ENCODE measurements at regions of chr13 and their contacts with region 1.

Region 1: DNA sequence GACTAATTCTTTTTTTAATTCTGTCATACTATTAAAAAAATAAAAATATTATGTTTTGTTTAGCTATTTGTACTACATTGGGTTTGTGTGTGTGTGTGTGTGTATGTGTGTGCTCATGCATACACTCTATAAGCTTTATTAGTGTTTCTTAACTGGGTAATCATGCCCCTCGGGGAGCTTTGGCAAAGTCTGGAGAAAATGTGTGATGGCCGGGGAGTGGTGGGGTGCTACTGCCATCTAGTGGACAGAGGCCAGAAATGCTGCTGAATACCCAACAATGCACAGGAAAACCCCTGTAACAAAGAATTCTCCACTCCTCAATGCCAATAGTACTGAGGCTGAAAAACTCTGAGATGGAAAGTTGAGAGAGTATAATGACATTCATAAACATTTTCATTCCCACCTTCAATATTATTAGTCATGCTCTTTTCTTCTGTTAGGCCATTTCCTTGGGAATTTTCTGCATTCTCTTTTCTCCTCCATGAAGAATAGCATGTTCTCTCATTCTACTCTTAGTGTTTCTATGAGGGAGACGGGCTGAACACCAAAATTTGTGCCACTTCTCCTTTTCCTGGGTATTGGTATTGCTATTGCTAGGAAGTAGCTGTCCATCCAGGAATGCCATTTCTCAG is 157.3 kb downstream of the DNAJC3 start:
- DNase-seq: peak; percentile 88
- H3K4me3 Mint-ChIP-seq: no peak overlapping the region
- H3K27ac Mint-ChIP-seq: no peak overlapping the region
- H3K4me1 Mint-ChIP-seq: no peaks in the 10 kb centered on the region
- H3K27me3 Mint-ChIP-seq: peaks cover 13% of the 10 kb centered on the region

Region 2: GRCh38 chr13:95480131-95480545 is 354.1 kb before region 1 on chr13:
- intact Hi-C with region 1: no loop called
- DNase-seq: peak; percentile 58
- H3K4me3 Mint-ChIP-seq: peak overlapping the region; percentile 29
- H3K27ac Mint-ChIP-seq: peak overlapping the region; percentile 58
- H3K4me1 Mint-ChIP-seq: peaks cover 13% of the 10 kb centered on the region
- H3K27me3 Mint-ChIP-seq: peaks cover 7% of the 10 kb centered on the region

Region 3: DNA sequence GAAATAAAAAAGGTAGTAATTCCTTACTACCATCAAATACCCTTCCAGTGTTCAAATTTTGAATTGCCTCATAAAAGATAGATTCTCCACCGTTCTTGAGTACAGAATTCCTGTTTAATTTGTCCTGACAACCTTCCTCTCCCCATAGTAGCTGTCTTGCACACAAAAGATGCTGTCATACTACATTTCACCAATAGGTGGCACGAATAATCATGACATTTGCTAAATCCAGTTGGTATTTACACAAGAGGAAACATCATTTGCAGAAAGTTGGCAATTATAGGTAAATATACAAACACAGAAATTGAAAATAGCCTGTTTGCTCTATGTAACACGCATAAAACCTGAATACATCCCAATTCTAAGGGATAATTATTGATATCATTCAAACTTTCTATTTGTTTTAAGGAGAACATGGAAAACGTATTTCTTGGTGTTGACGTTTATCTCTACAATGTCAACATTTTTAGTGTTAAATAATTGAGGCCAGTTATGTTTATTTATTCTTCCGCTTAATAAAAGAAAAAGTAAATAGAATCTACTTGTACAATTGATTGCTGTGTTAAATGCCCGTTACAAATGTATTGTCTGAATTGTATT is 340.1 kb before region 1 on chr13:
- intact Hi-C with region 1: loop called (anchors 1 kb)
- DNase-seq: peak; percentile 67
- H3K4me3 Mint-ChIP-seq: no peak overlapping the region
- H3K27ac Mint-ChIP-seq: no peak overlapping the region
- H3K4me1 Mint-ChIP-seq: peaks cover 2% of the 10 kb centered on the region
- H3K27me3 Mint-ChIP-seq: peaks cover 4% of the 10 kb centered on the region

Region 4: GRCh38 chr13:95536632-95537241 is 297.5 kb before region 1 on chr13:
- intact Hi-C with region 1: loop called (anchors 1 kb)
- DNase-seq: no peak
- H3K4me3 Mint-ChIP-seq: no peak overlapping the region
- H3K27ac Mint-ChIP-seq: no peak overlapping the region
- H3K4me1 Mint-ChIP-seq: peaks cover 7% of the 10 kb centered on the region
- H3K27me3 Mint-ChIP-seq: peaks cover 23% of the 10 kb centered on the region

Region 5: DNA sequence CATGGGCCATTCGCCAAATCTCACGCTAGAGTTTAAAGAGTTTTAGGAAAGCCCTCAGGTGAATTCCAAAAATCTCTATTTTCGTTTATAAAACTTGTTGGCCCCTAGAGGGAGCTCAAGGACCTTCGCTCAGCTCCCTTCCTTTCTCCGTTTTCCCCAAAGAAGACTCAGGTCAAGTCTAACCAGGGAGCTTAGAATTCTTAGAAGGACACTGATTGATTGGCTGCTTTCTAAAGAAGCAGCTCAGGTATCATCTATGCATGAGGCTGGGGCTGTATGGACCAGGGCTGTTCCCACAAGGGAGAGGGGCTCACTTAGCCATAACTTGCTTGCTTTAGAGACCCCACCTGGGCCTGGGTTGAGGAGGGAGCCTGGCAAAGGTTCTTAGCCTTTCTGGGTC is 210.2 kb before region 1 on chr13:
- intact Hi-C with region 1: loop called (anchors 1 kb)
- DNase-seq: peak; percentile 74
- H3K4me3 Mint-ChIP-seq: no peak overlapping the region
- H3K27ac Mint-ChIP-seq: no peak overlapping the region
- H3K4me1 Mint-ChIP-seq: no peaks in the 10 kb centered on the region
- H3K27me3 Mint-ChIP-seq: peaks cover 33% of the 10 kb centered on the region

Region 6: GRCh38 chr13:95660981-95661581 is 173.2 kb before region 1 on chr13:
- intact Hi-C with region 1: no loop called
- DNase-seq: peak; percentile 72
- H3K4me3 Mint-ChIP-seq: no peak overlapping the region
- H3K27ac Mint-ChIP-seq: no peak overlapping the region
- H3K4me1 Mint-ChIP-seq: no peaks in the 10 kb centered on the region
- H3K27me3 Mint-ChIP-seq: peaks cover 27% of the 10 kb centered on the region

Region 7: GRCh38 chr13:95784161-95784899 is 49.9 kb before region 1 on chr13:
- intact Hi-C with region 1: no loop called
- DNase-seq: no peak
- H3K4me3 Mint-ChIP-seq: no peak overlapping the region
- H3K27ac Mint-ChIP-seq: no peak overlapping the region
- H3K4me1 Mint-ChIP-seq: no peaks in the 10 kb centered on the region
- H3K27me3 Mint-ChIP-seq: no peaks in the 10 kb centered on the region

Measured in activated CD4-positive, alpha-beta T cell treated with anti-CD3 and anti-CD28 coated beads, Interleukin-2, amount 10 ng/mL, durations not matched to agents 24 days and 14 days (primary cell).